ENCODE measurements at regions of chr17 and their contacts with region 1.

Region 1: DNA sequence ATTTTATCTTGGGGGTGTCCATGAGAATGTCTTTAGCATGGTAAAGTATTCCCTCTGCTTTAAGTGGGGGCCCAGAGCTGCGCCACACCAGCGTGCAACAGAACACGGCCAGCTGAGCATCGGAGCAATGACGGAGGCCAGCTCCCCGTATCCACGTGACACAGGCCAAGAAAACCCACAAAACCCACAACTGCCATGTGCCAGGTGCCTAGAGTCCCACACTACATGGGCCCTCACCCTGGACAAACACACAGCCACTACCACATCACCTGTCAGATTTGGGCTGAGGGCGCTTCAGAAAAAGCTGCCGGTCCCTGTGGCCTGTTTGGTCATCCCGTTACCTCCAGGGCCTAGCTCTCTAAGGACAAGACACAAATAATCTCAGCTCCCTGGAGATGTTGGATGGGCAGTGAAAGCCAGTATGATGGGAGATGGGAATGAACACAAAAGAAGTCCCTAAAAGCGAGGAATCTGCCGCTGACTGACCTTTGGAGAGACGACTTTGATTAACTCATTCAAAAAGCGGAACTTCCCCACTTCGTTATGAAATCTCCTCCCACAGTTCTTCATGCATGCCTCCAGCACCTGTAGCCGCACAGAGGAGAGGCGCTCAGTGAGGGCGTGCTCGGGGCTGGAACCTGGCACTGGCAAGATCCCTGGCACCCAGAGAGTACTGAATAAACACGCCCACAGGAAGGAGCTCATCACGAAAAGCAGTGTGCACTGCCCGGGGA is 17.1 kb downstream of the GGA3 start:
- DNase-seq: peak; percentile 94
- H3K4me3 ChIP-seq: peak overlapping the region; percentile 38
- H3K27ac ChIP-seq: peak overlapping the region; percentile 75
- H3K4me1 ChIP-seq: peaks cover 58% of the 10 kb centered on the region
- CTCF ChIP-seq: no peak

Region 2: DNA sequence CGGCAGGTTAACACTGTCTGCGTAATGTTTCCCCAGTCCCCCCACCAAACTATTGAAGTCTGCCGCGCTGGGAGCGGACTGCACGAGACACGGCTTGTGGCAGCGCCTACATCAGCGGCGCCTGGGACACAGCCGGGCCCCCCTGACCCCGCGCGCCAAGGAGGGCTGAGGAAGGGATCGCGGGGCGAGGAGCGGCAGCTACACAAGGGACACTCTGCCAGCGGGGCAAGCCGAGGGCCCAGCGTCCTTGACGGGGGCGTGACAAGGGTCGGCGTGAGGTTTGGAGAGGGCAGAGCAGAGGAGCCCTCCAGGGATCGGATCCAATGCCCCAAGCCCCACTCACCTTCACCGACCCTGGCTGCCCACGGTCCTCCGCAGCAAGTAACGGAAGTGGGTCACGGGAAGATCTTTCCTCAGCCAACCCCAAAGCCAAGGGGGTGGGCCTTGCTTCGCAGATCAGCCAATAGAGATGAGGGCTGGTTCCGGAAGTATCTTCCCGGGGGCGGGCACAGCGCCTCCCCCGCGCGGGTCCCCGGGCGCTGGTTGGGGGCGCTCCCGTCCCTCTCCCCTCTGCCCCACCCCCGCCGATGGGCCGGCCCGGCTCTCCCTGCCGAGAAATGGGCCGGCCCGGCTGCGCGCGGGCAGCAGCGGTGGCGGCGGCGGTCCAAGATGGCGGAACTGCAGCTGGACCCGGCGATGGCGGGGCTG is 197.6 kb before region 1 on chr17 and contains the starts of genes ATP5PD and KCTD2:
- CTCF ChIA-PET with region 1: no interaction called
- POLR2A ChIA-PET with region 1: no interaction called
- intact Hi-C with region 1: no loop called
- DNase-seq: peak; percentile 99
- H3K4me3 ChIP-seq: peak within 1 kb of the TSS; percentile 75
- H3K27ac ChIP-seq: peak within 1 kb of the TSS; percentile 43
- H3K4me1 ChIP-seq: peaks cover 14% of the 10 kb centered on the region
- CTCF ChIP-seq: 0 out of 2 replicates have a peak, but pooled peaks have one; percentile 15
- total RNA-seq, gene ATP5PD: 293 and 301 TPM in 2 replicates
- total RNA-seq, gene KCTD2: 26.0 and 29.8 TPM in 2 replicates

Region 3: GRCh38 chr17:75228305-75228704 is 16.0 kb before region 1 on chr17:
- CTCF ChIA-PET with region 1: no interaction called
- POLR2A ChIA-PET with region 1: interaction called, 10 read pairs
- intact Hi-C with region 1: no loop called
- DNase-seq: no peak
- H3K4me3 ChIP-seq: no peak overlapping the region
- H3K27ac ChIP-seq: no peak overlapping the region
- H3K4me1 ChIP-seq: no peaks in the 10 kb centered on the region
- CTCF ChIP-seq: no peak

Measured in OCI-LY7 (cell line).